Activated T-helper 2 cell treated with anti-CD3 and anti-CD28 coated beads, Interferon-gamma antibody, Interleukin-2, Interleukin-4, amounts not matched to agents 10 μg/mL and 5 μg/mL and 100 μg/mL, durations not matched to agents 14 hours and 24 hours and 36 hours (primary cell): ENCODE measurements at regions of chr13 and their contacts with region 1.

Region 1: GRCh38 chr13:79405829-79406596 is at the start of gene RBM26:
- DNase-seq: peak; percentile 92
- H3K4me3 Mint-ChIP-seq: peak within 1 kb of the TSS; percentile 89
- H3K27ac Mint-ChIP-seq: peak within 1 kb of the TSS; percentile 97
- H3K4me1 Mint-ChIP-seq: peaks cover 42% of the 10 kb centered on the region
- H3K27me3 Mint-ChIP-seq: no peaks in the 10 kb centered on the region
- total RNA-seq, gene RBM26: 93.7 and 94.2 TPM in 2 replicates

Region 2: DNA sequence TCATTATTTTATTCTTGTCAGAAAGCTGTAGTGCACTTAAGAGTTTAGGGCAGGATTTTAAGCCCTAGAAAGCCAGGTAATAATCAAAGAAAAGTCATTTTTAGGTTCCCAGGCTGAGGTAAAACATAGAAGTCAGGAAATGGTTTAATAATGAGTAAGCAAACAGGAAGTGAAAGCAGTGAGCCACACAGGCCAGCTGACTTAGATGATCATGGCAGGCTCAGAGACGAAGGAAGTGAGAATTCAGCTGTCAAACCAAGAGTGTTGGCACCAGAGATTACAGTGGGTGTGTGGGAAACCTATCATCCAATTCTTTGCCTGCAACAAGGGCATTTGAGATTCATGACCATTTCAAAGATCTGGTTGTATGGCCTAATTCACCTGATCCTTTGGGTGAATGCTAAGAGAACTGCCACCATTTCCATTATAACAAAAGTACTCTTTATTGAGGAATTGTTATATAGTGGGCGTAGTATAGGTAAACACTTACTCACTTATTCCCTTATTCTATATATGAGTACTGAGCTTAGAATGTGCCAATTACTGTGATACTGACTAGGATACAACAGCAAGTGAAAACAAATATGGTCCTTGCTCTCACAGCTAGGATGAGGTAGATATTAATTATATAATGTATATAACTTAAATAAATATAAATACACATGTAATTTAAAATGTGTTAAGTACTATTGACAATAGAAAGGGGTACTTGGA is 1383.7 kb before region 1 on chr13:
- intact Hi-C with region 1: loop called (anchors 10 kb)
- DNase-seq: peak; percentile 32
- H3K4me3 Mint-ChIP-seq: no peak overlapping the region
- H3K27ac Mint-ChIP-seq: no peak overlapping the region
- H3K4me1 Mint-ChIP-seq: peaks cover 10% of the 10 kb centered on the region
- H3K27me3 Mint-ChIP-seq: no peaks in the 10 kb centered on the region

Region 3: DNA sequence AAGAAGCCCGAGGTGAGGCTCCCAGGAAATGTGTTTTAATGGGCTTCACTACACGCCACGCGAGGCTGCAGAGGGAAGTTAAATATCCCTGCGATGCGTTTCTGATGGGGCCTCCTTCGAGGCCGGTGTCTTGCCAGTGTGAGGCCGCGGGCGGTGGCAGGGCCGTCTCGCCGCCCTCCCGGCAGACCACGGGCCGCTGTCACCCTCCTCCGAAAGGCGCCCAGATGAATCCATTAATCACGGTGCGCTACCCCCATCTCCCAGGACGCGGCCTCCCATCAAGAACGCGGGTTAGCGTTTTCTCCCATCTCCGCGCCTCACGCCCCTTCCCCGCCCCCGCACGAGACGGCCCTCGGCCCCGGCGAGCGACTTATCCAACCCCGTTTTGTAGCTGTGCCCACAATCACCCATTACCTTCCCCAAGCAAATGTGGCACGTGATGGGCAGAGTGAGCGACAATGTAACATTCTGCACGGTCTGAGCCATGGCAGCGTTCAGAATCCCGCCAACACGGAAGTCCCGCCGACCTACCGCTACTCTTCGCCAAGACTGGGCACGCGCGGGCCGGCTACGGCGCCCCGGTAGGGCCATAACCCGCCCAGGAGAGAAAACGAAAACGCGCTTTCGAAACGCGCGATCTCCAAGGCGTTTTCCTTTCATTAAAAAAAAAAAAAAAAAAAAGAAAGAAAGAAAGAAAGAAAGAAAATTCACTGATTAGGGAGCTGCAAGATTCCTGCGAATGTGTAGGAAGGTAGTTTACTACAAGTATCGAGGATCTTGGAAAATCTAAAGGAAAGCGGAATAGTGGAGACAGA is 747.2 kb before region 1 on chr13 and contains the start of gene OBI1:
- intact Hi-C with region 1: loop called (anchors 5 kb)
- DNase-seq: peak; percentile 85
- H3K4me3 Mint-ChIP-seq: peak within 1 kb of the TSS; percentile 99
- H3K27ac Mint-ChIP-seq: peak within 1 kb of the TSS; percentile 98
- H3K4me1 Mint-ChIP-seq: peaks cover 42% of the 10 kb centered on the region
- H3K27me3 Mint-ChIP-seq: no peaks in the 10 kb centered on the region
- total RNA-seq, gene OBI1: 17.7 and 18.1 TPM in 2 replicates

Region 4: DNA sequence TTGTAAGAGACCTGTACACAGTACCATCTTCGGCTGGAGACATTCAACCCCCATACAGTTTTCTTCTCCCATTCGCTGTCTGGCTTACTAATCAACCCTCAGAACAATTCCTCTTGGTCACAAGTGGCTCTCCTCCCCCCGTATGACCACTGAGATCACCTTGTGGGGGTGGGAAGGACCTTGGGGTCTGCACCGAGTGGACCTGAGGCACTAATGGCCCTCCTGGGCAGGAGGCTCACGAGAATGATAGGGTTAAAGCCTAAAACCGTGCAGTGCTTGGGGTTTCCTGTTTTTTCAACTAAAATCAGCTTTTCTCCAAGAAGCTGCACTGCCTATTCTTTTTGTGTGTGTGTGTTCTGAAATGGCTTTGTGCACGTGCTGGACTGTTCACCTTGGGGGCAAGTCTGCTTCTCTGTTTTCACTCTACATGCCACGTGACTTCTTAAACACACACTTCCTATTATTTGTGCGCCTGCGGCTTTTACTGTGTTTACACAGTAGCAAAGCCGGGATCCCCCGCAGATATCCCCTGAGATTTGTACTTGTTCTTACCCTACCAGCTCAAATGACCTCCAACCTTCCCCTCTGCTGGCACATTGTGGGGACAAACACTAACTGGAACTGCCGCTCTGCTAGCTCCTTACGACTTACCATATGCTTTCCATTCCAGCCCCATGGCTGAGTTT is 12.3 kb before region 1 on chr13:
- intact Hi-C with region 1: loop called (anchors 1 kb)
- DNase-seq: peak; percentile 32
- H3K4me3 Mint-ChIP-seq: peak overlapping the region; percentile 70
- H3K27ac Mint-ChIP-seq: peak overlapping the region; percentile 74
- H3K4me1 Mint-ChIP-seq: peaks cover 53% of the 10 kb centered on the region
- H3K27me3 Mint-ChIP-seq: no peaks in the 10 kb centered on the region

Region 5: DNA sequence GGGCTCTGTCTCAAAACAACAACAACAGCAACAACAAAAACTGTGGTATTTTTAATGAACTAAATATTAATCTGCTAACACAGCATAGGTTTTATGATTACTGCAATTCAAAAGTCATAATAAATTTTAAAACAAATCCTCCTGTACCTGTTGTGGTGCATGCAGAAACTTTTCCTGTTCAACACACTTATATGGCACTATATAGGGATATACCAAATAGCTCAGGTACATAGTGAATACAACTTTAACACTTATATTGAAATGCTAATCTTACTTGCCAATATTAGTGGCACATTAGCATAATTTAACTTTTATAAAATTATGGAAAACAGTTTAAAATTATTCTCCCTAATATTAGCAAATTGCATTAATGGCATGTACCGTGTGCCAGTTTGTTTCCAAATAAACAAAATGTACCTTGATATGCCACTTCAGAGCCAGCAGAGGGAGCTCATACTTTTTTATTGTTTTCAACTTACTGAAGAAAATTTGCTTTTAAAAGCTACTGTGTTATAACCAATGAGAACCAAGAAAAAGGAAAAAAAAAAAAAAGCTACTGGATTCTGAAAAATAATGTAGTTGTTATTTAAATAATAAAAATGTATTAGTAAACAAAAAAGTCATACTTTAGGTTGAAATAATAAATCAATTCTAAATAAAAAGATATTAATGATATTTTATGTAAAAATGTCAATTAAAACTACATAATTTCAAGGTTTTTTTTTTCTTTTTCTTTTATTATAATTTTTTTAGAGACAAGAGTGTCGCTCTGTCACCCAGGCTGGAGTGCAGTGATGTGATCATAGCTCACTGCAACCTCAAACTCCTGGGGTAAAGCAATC is 18.0 kb after region 1 on chr13:
- intact Hi-C with region 1: loop called (anchors 2 kb)
- DNase-seq: no peak
- H3K4me3 Mint-ChIP-seq: no peak overlapping the region
- H3K27ac Mint-ChIP-seq: no peak overlapping the region
- H3K4me1 Mint-ChIP-seq: peaks cover 26% of the 10 kb centered on the region
- H3K27me3 Mint-ChIP-seq: no peaks in the 10 kb centered on the region

Region 6: DNA sequence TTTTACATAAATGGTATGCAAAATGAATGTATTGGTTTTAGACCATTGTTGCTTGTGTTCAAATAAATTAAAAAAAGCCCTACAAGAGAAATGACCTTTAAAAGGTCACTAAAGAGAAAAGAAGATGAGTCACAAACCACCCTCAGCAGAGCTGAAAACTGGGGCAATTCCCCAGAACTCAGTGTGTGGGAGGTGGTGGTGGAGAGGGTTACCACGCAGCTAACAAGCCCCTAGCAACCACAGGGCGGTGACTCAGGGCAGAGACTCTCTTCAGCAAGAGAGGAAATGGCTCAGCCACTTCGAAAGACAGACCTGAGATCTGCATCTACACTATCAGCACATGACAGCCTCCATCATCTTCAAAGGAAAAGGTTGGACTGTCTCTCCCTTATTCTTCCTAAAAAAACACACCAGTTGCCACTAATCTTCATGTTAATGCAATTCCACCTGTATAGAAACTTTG is 45.5 kb after region 1 on chr13:
- intact Hi-C with region 1: no loop called
- DNase-seq: peak; percentile 88
- H3K4me3 Mint-ChIP-seq: peak overlapping the region; percentile 75
- H3K27ac Mint-ChIP-seq: peak overlapping the region; percentile 97
- H3K4me1 Mint-ChIP-seq: peaks cover 80% of the 10 kb centered on the region
- H3K27me3 Mint-ChIP-seq: no peaks in the 10 kb centered on the region

Region 7: GRCh38 chr13:79475569-79475968 is 69.6 kb after region 1 on chr13:
- intact Hi-C with region 1: no loop called
- DNase-seq: no peak
- H3K4me3 Mint-ChIP-seq: no peak overlapping the region
- H3K27ac Mint-ChIP-seq: no peak overlapping the region
- H3K4me1 Mint-ChIP-seq: peaks cover 43% of the 10 kb centered on the region
- H3K27me3 Mint-ChIP-seq: no peaks in the 10 kb centered on the region

Region 8: DNA sequence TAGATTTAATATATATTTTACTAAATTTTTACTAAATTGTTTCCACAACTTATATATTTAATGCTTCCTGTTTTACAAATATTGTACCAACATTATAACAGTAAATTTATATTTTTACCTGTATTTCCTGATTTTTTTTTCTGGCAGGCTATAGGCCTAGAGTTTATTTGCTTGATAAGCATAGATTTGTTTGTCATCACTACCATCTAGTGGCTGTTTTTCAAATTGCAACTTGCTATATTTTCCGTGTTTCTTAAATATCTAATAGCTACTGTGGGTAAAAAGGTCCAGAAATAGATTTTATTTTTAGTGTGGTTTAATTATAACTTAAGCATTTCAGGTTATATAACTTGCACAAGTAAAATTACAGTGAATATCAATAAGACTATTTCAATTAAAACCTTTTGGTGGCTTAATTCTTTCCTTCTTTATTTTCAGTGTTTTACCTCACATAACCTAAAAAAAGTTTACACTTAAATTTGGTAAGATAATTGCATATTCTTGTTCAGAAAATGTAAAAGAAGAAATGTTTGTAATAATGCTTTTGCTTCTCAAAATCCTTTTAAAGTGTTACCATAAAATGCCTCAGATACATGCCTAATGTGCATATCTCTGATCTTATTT is 135.5 kb after region 1 on chr13:
- intact Hi-C with region 1: loop called (anchors 5 kb)
- DNase-seq: no peak
- H3K4me3 Mint-ChIP-seq: no peak overlapping the region
- H3K27ac Mint-ChIP-seq: no peak overlapping the region
- H3K4me1 Mint-ChIP-seq: peaks cover 43% of the 10 kb centered on the region
- H3K27me3 Mint-ChIP-seq: no peaks in the 10 kb centered on the region